GM10248 (cell line): ENCODE measurements at regions of chr19 and their contacts with region 1.

Region 1: DNA sequence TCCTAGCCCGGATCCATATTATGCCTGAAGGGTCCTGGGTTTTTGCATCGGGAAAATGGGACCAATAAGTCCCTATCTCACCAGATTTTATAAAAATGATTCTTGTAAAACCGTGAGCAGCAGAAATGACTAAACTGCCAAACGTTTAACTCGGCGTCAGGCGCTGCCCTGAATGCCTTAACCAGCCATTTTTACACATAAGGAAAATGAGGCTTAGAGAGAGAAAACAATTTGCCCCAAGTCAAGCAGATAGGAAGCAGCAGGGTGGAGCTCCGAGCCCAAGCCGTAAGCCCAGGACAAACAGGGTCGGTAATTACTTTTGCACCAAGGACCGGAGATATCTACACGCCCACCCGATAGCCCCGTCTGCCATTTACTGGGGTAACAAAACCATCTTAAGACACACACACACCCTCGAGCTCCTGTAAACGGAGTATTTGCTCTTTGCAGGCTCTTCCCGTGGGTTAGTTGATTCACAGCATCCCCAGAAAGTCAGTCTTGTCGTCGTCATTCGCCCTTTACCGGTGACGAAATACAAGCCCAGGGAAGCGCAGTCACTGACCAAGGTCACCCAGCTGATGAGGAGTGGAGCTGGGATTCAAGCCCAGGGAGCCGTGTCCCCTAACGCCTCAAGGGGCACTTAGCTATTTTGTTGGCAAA is 16.0 kb upstream of the MRI1 start:
- DNase-seq: no peak
- CTCF ChIP-seq: no peak

Region 2: GRCh38 chr19:13644645-13645044 is 103.7 kb before region 1 on chr19:
- CTCF ChIA-PET with region 1: no interaction called
- POLR2A ChIA-PET with region 1: no interaction called
- DNase-seq: no peak
- CTCF ChIP-seq: no peak

Region 3: GRCh38 chr19:13731147-13731964 is 16.9 kb before region 1 on chr19:
- CTCF ChIA-PET with region 1: interaction called, 15 read pairs
- POLR2A ChIA-PET with region 1: no interaction called
- DNase-seq: peak; percentile 99
- CTCF ChIP-seq: no peak